Activated CD4-positive, alpha-beta memory T cell treated with anti-CD3 and anti-CD28 coated beads, Interleukin-2, amount 10 ng/mL, durations not matched to agents 7 days and 5 days (primary cell): ENCODE measurements at regions of chr13 and their contacts with region 1.

Region 1: GRCh38 chr13:110819203-110820014 is 95.5 kb downstream of the ANKRD10 start:
- DNase-seq: peak; percentile 80
- H3K4me3 Mint-ChIP-seq: no peak overlapping the region
- H3K27ac Mint-ChIP-seq: no peak overlapping the region
- H3K4me1 Mint-ChIP-seq: peaks cover 5% of the 10 kb centered on the region
- H3K27me3 Mint-ChIP-seq: peaks cover 1% of the 10 kb centered on the region

Region 2: DNA sequence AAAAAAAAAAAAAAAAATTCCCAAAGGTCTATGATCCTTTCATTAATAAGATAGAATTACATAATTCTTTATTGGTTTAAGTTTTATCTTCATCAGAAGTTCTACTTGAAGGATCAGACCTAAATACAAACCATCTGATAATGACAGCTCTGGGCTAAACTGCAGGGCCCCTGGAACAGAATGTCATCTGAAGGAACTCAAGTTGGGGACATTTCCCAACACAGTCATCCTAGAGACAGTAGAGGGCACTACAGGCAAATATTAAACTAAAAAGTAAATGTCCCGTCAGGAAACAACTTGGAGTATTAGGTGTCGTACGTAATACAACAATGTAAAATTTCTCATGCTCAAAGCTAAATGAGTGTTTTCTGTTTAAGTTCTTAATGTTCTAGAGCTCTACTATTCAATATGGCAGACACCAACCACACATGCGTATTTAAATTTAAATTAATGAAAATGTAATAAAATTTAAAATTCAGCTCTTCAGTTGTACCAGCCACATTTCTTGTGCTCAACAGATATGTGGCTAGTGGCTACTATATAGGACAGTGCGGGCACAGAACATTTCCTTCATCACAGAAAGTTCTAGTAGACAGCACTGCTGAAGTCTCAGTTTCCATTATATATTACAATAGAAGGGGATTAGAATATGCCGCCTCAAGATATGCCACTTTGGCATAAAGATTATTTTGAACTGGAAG is 225.8 kb before region 1 on chr13:
- CTCF ChIA-PET with region 1: interaction called, 14 read pairs
- POLR2A ChIA-PET with region 1: no interaction called
- DNase-seq: no peak
- H3K4me3 Mint-ChIP-seq: no peak overlapping the region
- H3K27ac Mint-ChIP-seq: no peak overlapping the region
- H3K4me1 Mint-ChIP-seq: no peaks in the 10 kb centered on the region
- H3K27me3 Mint-ChIP-seq: peaks cover 7% of the 10 kb centered on the region